K562 (cell line): ENCODE measurements at regions of chr11 and their contacts with region 1.

Region 1: GRCh38 chr11:65497141-65498041 is 1.5 kb upstream of the MALAT1 start:
- DNase-seq: peak; percentile 86 to 100 (median 90)
- ATAC-seq: peak; percentile 76
- H3K4me3 ChIP-seq: peak overlapping the region; percentile 84
- H3K27ac ChIP-seq: peak overlapping the region; percentile 99
- H3K4me1 ChIP-seq: peaks cover 36 to 38% of the 10 kb centered on the region in 2 experiments
- H3K27me3 ChIP-seq: no peaks in the 10 kb centered on the region
- CTCF ChIP-seq: peak in 1 of 3 experiments; percentile 5; a peak in 1 of 6 replicates
- EP300 ChIP-seq: peak; percentile 99
- POLR2A ChIP-seq: peak; percentile 82
- RAD21 ChIP-seq: peak in 1 of 2 experiments; percentile 47

Region 2: GRCh38 chr11:65314501-65315203 is 182.7 kb before region 1 on chr11 and contains the start of gene CDC42EP2:
- CTCF ChIA-PET with region 1: no interaction called
- POLR2A ChIA-PET with region 1: interaction called, 19 read pairs
- in situ Hi-C with region 1: no loop called
- intact Hi-C with region 1: no loop called
- DNase-seq: peak; percentile 92 to 99 (median 97)
- ATAC-seq: peak; percentile 96
- H3K4me3 ChIP-seq: peak within 1 kb of the TSS; percentile 77
- H3K27ac ChIP-seq: peak within 1 kb of the TSS; percentile 64
- H3K4me1 ChIP-seq: peaks cover 16 to 48% of the 10 kb centered on the region in 2 experiments; a peak in 4 of 5 replicates
- H3K27me3 ChIP-seq: no peaks in the 10 kb centered on the region
- CTCF ChIP-seq: no peak; a peak in 1 of 6 replicates
- EP300 ChIP-seq: no peak
- POLR2A ChIP-seq: peak; percentile 79
- RAD21 ChIP-seq: no peak
- polyA plus RNA-seq, gene CDC42EP2: 0.27 to 0.52 TPM

Region 3: DNA sequence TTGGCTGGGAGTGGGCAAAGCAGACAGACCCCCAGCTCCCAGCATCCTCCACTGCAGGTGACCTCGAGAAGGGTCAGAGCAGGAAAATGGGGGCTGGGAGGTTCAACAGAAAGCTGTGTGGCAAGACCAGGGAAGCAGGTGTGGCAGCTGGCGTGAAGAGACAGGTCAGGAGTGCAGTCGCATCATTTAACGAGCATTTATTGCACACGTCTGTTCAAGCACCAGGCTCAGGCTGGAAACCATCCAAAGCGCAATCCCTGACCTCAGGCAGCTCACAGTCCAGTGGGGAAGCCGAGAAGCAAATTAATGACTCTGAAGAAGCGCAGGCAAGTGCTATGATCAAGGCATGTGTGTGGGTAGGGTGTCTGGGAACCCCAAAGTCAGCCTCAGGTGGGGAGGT is 122.4 kb before region 1 on chr11:
- CTCF ChIA-PET with region 1: no interaction called
- POLR2A ChIA-PET with region 1: interaction called, 253 read pairs
- in situ Hi-C with region 1: no loop called
- intact Hi-C with region 1: no loop called
- DNase-seq: no peak
- ATAC-seq: no peak
- H3K4me3 ChIP-seq: no peak overlapping the region
- H3K27ac ChIP-seq: no peak overlapping the region
- H3K4me1 ChIP-seq: peaks cover 8 to 49% of the 10 kb centered on the region in 2 experiments; a peak in 4 of 5 replicates
- H3K27me3 ChIP-seq: no peaks in the 10 kb centered on the region
- CTCF ChIP-seq: no peak
- EP300 ChIP-seq: no peak
- POLR2A ChIP-seq: no peak
- RAD21 ChIP-seq: no peak

Region 4: DNA sequence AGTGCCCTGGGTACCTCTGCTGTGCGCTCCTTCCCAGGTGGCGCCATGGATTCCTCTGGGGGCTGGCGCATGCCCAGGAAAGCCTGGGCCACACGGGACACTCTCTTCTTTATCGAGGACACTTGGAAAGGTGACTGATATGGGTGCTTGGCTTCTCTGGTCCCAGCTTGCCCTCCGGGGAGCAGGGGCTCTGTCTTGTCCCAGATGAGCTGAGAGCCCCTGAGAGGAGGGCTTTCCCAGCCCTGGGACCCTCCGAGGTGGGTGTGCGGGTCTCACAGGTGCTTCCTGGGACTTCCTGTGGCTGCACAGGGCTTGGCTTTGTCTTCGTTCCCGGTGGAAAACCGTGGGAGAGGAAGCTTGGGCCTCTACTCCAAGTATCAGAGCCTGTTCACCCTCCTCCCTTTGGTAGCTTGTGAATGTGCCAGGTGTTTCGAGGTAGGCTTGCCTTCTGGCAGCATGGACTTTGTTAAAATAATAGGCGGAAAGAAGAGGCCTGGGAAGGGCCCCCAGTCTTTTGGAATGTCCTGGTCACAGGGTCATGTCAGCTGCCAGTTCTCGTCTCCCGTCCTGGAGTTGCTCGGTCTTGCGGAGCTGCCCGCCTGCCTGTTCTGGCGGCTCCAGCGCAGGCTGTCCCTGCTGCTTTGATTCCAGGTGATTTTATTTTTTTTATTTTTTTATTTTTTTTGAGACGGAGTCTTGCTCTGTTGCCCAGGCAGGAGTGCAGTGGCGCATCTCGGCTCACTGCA is 84.9 kb before region 1 on chr11:
- CTCF ChIA-PET with region 1: no interaction called
- POLR2A ChIA-PET with region 1: interaction called, 1,349 read pairs
- in situ Hi-C with region 1: no loop called
- intact Hi-C with region 1: no loop called
- DNase-seq: no peak
- ATAC-seq: no peak
- H3K4me3 ChIP-seq: no peak overlapping the region
- H3K27ac ChIP-seq: no peak overlapping the region
- H3K4me1 ChIP-seq: peaks cover 18 to 36% of the 10 kb centered on the region in 2 experiments
- H3K27me3 ChIP-seq: no peaks in the 10 kb centered on the region
- CTCF ChIP-seq: no peak
- EP300 ChIP-seq: no peak
- POLR2A ChIP-seq: no peak
- RAD21 ChIP-seq: no peak

Region 5: DNA sequence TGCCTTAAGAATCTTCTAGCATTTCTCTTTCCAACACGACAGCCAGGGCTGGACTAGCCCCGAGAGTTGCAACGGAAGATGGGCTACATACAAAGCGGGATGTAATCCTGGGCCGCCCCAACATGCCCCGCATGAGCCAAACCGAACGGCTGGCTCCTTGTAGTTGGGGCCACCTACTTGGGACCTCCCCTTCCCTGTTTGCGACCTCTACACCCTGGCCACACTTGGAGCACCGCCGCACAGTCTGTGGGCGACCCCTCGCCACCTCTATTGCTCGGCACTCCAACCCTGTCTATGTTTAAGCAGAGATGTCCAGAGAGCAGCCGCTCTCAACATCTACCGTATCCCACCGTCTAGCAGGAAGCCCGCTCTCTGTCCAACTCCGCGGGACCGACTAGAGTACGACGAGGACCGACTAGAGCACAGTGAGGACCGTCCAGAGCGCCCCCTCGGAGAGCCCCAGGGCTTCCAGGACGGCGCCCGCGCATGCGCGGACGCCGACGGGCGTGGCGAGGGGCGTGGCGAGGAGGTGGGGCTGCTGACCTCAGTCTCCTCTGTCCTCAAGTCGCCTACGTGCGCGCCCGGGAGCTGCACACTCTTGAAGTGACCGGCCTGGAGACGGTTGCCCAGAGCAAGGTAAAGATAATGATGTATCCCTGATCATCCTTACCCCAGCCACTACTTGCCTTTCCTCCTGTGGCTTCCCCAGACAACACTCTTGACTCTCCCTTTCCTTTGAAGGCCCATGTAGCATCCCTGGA is 42.5 kb before region 1 on chr11:
- CTCF ChIA-PET with region 1: no interaction called
- POLR2A ChIA-PET with region 1: interaction called, 2,118 read pairs
- in situ Hi-C with region 1: no loop called
- intact Hi-C with region 1: no loop called
- DNase-seq: peak; percentile 97 to 99 (median 98)
- ATAC-seq: peak; percentile 88
- H3K4me3 ChIP-seq: peak overlapping the region; percentile 70
- H3K27ac ChIP-seq: peak overlapping the region; percentile 87
- H3K4me1 ChIP-seq: peaks cover 21 to 38% of the 10 kb centered on the region in 2 experiments; a peak in 4 of 5 replicates
- H3K27me3 ChIP-seq: no peaks in the 10 kb centered on the region
- CTCF ChIP-seq: peak; percentile 35 to 55 (median 50); a peak in 5 of 6 replicates
- EP300 ChIP-seq: no peak
- POLR2A ChIP-seq: peak; percentile 98
- RAD21 ChIP-seq: no peak

Region 6: GRCh38 chr11:65546217-65546958 is 49.0 kb after region 1 on chr11:
- CTCF ChIA-PET with region 1: no interaction called
- POLR2A ChIA-PET with region 1: interaction called, 16 read pairs
- in situ Hi-C with region 1: no loop called
- intact Hi-C with region 1: no loop called
- DNase-seq: peak; percentile 95 to 98 (median 98)
- ATAC-seq: peak; percentile 90
- H3K4me3 ChIP-seq: peak overlapping the region; percentile 67
- H3K27ac ChIP-seq: peak overlapping the region; percentile 62; the same call in 1 of the 3 replicates
- H3K4me1 ChIP-seq: peaks cover 20 to 51% of the 10 kb centered on the region in 2 experiments
- H3K27me3 ChIP-seq: no peaks in the 10 kb centered on the region
- CTCF ChIP-seq: no peak
- EP300 ChIP-seq: no peak
- POLR2A ChIP-seq: peak; percentile 56
- RAD21 ChIP-seq: no peak

Region 7: DNA sequence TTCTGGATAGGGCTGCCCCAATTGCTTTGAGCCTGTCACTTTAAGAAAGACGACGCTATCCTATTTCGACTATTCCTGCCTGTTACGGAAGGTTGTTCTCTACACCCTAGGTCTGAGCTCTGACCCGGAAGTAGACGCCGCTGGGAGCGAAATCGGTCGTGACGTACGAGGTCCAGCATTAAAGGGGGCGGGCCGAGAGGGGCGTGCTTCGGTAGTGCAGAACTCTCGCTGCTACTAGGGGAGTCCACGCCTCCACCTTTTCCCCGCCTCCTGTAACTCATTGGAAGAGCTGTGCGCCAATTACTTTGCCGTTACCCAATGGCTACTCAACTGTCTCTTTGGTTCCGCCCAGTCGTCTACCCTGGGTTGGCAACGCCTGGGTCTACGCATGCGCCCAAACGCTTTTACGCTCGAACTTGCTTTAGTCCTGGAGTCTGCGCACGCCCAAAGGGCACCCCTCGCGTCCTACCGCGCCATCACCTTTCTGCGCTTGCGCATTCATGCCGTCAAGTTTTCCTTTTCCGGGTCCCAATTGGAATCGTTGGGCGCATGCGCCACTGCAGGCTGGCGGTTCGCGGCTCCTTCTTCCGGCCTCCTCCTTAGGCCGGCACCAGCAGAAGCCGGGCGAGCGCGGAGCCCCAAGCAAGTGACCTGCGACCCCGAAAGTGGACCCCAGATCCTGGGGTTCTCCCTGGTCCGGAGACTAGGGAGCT is 118.0 kb after region 1 on chr11 and contains the start of gene PCNX3:
- CTCF ChIA-PET with region 1: no interaction called
- POLR2A ChIA-PET with region 1: interaction called, 18 read pairs
- in situ Hi-C with region 1: no loop called
- intact Hi-C with region 1: no loop called
- DNase-seq: peak; percentile 97 to 100 (median 99)
- ATAC-seq: peak; percentile 91
- H3K4me3 ChIP-seq: peak within 1 kb of the TSS; percentile 94
- H3K27ac ChIP-seq: peak within 1 kb of the TSS; percentile 74
- H3K4me1 ChIP-seq: peaks cover 28 to 78% of the 10 kb centered on the region in 2 experiments
- H3K27me3 ChIP-seq: no peaks in the 10 kb centered on the region
- CTCF ChIP-seq: no peak
- EP300 ChIP-seq: peak; percentile 37; the same call in 1 of the 2 replicates
- POLR2A ChIP-seq: peak; percentile 84
- RAD21 ChIP-seq: no peak
- polyA plus RNA-seq, gene PCNX3: 0.11 to 0.29 TPM

Region 8: DNA sequence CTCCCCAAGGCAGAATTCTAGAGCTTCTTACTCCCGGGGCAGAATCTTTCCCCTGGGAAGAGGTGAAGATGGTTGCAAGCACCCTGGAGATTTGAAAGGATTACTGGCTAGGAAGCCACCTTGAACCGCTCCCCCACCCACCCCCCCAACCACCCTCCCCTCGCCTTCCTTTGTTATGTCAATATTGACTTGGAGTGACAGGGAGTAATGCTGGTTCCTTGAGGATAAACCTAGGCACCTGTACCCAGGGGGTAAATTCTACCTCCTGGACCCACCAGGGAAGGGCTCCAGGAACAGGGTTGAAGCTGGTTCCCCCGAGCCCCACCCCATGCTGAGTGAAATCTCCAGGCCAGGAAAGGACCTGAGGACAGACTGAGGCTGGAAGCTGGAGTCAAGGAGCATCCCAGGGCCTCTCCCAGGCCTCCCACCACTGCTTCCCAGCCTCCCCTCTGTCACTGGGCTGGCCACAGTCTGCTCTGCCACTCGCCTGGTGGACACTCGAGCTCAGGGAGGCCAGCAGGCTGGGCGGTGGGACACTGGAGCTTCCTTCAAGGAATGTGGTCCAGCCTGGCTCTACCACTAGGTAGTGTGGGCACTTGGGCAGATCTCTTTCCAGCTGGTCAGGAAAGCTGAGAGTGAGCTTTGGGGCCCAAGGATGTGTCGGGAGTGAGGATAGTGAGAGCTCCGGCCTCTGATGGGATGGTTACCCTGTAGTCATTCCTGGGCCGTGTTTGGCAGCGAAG is 292.7 kb after region 1 on chr11:
- CTCF ChIA-PET with region 1: no interaction called
- POLR2A ChIA-PET with region 1: no interaction called
- in situ Hi-C with region 1: no loop called
- intact Hi-C with region 1: no loop called
- DNase-seq: no peak
- ATAC-seq: no peak
- H3K4me3 ChIP-seq: no peak overlapping the region
- H3K27ac ChIP-seq: no peak overlapping the region
- H3K4me1 ChIP-seq: peaks cover 0 to 49% of the 10 kb centered on the region in 2 experiments; a peak in 2 of 5 replicates
- H3K27me3 ChIP-seq: peaks cover 56 to 71% of the 10 kb centered on the region in 2 experiments
- CTCF ChIP-seq: no peak
- EP300 ChIP-seq: no peak
- POLR2A ChIP-seq: no peak
- RAD21 ChIP-seq: no peak